Sigmoid colon (tissue), 7 donors: ENCODE measurements at regions of chr2 and their contacts with region 1.

Region 1: DNA sequence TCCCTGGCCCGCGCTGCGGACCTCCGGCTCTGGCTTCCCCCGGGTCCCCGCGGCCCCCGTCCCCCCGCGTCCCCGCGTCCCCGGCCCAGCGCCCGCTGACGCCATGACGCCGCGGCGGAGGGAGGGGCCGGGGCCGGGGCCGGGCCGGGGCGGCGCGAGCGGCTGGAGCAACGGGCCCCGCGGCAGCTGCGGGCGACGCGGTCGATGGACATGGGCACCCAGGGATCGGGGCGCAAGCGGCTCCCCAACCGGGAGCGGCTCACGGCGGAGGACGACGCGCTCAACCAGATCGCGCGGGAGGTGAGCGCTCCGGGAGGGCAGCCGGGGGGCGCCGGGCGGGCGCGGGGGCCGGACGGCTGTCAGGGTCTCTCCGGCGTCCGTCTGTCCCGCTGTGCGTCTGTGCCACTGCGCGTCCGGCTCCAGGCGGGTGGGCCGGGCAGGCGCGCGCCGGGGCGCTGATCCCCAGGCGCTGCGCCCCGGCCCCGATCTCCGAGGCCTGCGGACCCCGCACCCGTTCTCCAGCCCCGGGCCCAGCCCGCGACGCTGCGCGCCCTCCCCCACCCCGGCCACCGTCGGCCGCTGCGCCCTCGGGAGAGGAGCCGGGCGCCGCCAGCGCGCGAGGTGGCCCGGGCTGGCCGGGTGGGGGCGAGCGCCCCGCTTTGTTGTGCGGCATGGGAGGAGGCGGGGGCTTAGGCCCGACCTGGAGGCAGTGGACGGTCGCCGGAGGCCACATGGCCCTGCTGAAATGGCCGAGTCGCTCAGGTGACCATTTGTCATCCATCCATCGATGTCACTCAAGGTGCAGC is at the start of gene LRRFIP1:
- DNase-seq: peak; percentile 72
- H3K4me3 ChIP-seq: peak within 1 kb of the TSS; percentile 47 to 93 (median 64)
- H3K27ac ChIP-seq: peak within 1 kb of the TSS; percentile 75 to 87 (median 78)
- H3K4me1 ChIP-seq: peaks cover 0 to 55% (median 24%) of the 10 kb centered on the region in 4 donors
- H3K27me3 ChIP-seq: no peaks in the 10 kb centered on the region
- CTCF ChIP-seq: no peak
- EP300 ChIP-seq: no peak
- POLR2A ChIP-seq: no peak
- total RNA-seq, gene LRRFIP1: 112 to 185 (median 136) TPM

Region 2: DNA sequence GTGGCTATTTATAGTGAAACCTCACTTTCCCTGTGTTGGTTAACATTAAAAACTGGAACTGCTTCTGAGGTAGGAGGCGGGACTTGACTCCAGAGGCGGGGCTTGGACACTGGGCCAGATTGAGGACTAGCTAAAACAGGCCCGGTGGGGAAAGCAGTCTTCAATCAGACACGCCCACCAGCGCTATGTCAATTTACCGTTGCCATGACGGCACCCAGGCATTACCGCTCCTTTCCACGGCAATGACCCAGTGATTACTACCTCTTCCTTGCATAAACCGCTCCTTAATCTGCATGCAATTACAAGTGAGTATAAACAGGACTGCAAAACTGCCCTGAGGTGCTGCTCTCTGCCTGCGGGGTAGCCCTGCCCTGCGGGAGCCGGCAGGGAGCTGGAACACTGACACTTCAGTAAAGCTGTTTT is 35.0 kb after region 1 on chr2:
- intact Hi-C with region 1: loop called (anchors 2 kb)
- DNase-seq: peak; percentile 98
- H3K4me3 ChIP-seq: peak overlapping the region in 2 of 4 donors; percentile 16 to 23
- H3K27ac ChIP-seq: peak overlapping the region; percentile 62 to 83 (median 75)
- H3K4me1 ChIP-seq: peaks cover 0 to 37% (median 26%) of the 10 kb centered on the region in 4 donors
- H3K27me3 ChIP-seq: no peaks in the 10 kb centered on the region
- CTCF ChIP-seq: no peak
- EP300 ChIP-seq: peak in 3 of 4 donors; percentile 2 to 34 (median 11)
- POLR2A ChIP-seq: no peak